CD8-positive, alpha-beta T cell (primary cell): ENCODE measurements at regions of chr2 and their contacts with region 1.

Region 1: DNA sequence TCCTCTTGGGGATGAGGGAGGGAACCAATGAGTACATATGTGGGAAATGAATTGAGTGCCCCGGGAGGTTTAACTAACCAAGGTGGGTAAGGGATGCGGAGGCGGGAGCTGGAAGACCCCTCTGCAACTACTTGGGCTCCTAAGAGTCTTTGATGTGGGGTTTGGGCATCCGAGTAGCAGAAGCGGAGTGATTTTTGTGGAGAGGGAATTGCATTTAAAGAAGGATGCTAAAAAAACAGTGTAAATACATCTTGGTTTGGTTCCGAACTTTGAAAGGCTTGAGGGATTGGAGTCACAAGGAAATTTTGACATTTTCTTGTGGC is 215.7 kb downstream of the MCFD2 start:
- DNase-seq: peak in 3 of 9 experiments; percentile 12 to 52 (median 28)
- ATAC-seq: no peak
- H3K4me3 ChIP-seq: peak overlapping the region; percentile 56 to 61
- H3K4me3 Mint-ChIP-seq: peak overlapping the region; percentile 95
- H3K27ac ChIP-seq: peak overlapping the region; percentile 21 to 50
- H3K27ac Mint-ChIP-seq: peak overlapping the region; percentile 94
- H3K4me1 ChIP-seq: peaks cover 13% of the 10 kb centered on the region
- H3K4me1 Mint-ChIP-seq: peaks cover 56% of the 10 kb centered on the region
- H3K27me3 ChIP-seq: no peaks in the 10 kb centered on the region
- H3K27me3 Mint-ChIP-seq: no peaks in the 10 kb centered on the region
- CTCF ChIP-seq: no peak

Region 2: DNA sequence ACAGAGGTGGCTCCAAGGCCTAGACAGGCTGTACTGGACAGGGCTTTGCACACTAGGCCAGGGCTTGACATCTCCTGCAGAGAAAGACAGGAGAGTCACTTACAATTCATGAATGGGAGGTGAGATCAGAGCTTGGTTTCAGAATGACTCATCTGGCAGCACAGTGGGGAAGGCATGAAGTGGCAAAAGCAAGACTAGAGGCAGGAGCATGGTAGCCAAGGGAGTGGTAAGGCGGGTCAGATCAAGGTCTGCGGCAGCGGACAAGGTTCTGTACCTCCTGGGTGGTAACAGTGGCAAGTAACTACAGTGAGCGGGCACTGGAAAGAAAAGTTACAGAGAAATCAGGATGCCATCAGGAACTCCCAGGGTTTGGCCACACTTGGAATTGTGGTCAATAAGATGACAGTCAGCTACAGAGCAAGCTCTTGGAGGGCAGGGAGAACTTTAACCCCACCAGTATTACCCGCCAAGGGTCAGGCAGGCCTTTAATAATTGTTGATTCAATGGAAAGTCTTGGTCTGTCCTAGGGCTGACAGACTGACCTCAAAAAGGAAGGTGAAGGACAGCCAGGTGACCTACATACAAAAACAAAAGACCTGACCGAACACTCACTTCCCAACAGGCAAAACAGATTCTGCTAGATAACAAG is 210.0 kb after region 1 on chr2:
- CTCF ChIA-PET with region 1: no interaction called
- POLR2A ChIA-PET with region 1: no interaction called
- intact Hi-C with region 1: loop called in 1 of 2 experiments (anchors 5 kb)
- DNase-seq: no peak
- ATAC-seq: no peak
- H3K4me3 ChIP-seq: no peak overlapping the region
- H3K4me3 Mint-ChIP-seq: no peak overlapping the region
- H3K27ac ChIP-seq: no peak overlapping the region
- H3K27ac Mint-ChIP-seq: no peak overlapping the region
- H3K4me1 ChIP-seq: peaks cover 13% of the 10 kb centered on the region
- H3K4me1 Mint-ChIP-seq: peaks cover 33% of the 10 kb centered on the region
- H3K27me3 ChIP-seq: no peaks in the 10 kb centered on the region
- H3K27me3 Mint-ChIP-seq: no peaks in the 10 kb centered on the region
- CTCF ChIP-seq: no peak